ENCODE measurements at regions of chr17 and their contacts with region 1.

Region 1: DNA sequence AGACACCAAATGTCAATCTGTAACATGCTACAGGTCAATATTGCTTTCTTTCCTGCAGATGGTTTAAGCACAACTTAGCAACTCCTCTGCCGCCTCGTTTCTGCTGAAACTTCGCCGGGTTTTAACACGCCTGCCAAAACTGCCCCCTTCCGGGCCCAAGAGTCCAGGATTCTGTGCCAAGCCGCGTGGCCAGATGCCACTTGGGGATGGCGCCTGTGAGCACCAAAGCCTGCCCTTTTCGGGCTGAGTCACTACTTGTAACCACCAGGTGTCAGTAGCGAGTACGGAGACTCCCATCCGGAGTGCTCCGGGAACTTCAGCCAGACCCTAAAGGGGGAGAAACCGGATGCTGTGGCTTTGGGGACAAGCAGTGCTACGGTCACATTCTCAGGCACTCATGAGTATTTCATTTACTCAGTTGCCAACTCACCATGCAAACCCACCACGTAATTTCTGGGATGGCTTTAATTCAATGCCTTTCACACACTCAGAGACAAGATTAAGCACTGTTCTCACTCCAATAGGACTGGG is 7.8 kb downstream of the PMP22 start:
- DNase-seq: peak; percentile 61
- H3K4me3 Mint-ChIP-seq: no peak overlapping the region
- H3K27ac Mint-ChIP-seq: no peak overlapping the region
- H3K4me1 Mint-ChIP-seq: peaks cover 26% of the 10 kb centered on the region
- H3K27me3 Mint-ChIP-seq: peaks cover 51% of the 10 kb centered on the region

Region 2: DNA sequence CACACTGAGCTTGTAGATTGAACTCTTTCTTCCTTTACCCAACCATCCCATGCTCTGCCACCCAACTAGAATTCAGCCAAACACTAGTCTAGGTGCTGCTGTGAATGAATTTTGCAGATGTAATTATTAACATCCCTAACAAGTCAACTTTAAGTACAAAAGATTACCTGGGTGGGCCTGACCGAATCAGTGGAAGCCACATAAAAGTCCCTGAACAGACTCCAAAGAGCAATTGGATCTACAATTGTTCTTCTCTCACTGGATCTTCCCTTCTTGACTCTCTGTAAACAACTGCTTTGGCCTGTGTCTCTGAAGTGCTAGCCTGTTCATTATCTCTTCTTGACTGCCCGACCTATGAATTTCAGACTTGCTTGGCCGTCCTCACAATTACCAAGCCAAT is 60.1 kb before region 1 on chr17:
- CTCF ChIA-PET with region 1: no interaction called
- POLR2A ChIA-PET with region 1: no interaction called
- DNase-seq: no peak
- H3K4me3 Mint-ChIP-seq: no peak overlapping the region
- H3K27ac Mint-ChIP-seq: no peak overlapping the region
- H3K4me1 Mint-ChIP-seq: no peaks in the 10 kb centered on the region
- H3K27me3 Mint-ChIP-seq: peaks cover 10% of the 10 kb centered on the region

Region 3: GRCh38 chr17:15502369-15503112 is 245.2 kb after region 1 on chr17:
- CTCF ChIA-PET with region 1: interaction called, 35 read pairs
- POLR2A ChIA-PET with region 1: no interaction called
- DNase-seq: peak; percentile 70
- H3K4me3 Mint-ChIP-seq: no peak overlapping the region
- H3K27ac Mint-ChIP-seq: no peak overlapping the region
- H3K4me1 Mint-ChIP-seq: peaks cover 4% of the 10 kb centered on the region
- H3K27me3 Mint-ChIP-seq: no peaks in the 10 kb centered on the region

Measured in activated CD4-positive, alpha-beta memory T cell treated with anti-CD3 and anti-CD28 coated beads, Interleukin-2, amount 10 ng/mL, durations not matched to agents 7 days and 5 days (primary cell).